ENCODE measurements at regions of chr4 and their contacts with region 1.

Region 1: GRCh38 chr4:119041951-119042560 is 93.6 kb upstream of the MYOZ2 start:
- DNase-seq: peak in 31 of 35 experiments; percentile 13 to 84 (median 39)
- ATAC-seq: peak; percentile 75 to 91 (median 84)
- H3K4me3 ChIP-seq: no peak overlapping the region
- H3K4me3 Mint-ChIP-seq: no peak overlapping the region
- H3K27ac ChIP-seq: no peak overlapping the region
- H3K27ac Mint-ChIP-seq: no peak overlapping the region
- H3K4me1 ChIP-seq: no peaks in the 10 kb centered on the region
- H3K4me1 Mint-ChIP-seq: peaks cover 0 to 6% (median 4%) of the 10 kb centered on the region in 3 donors
- H3K27me3 ChIP-seq: no peaks in the 10 kb centered on the region
- H3K27me3 Mint-ChIP-seq: peaks cover 0 to 2% of the 10 kb centered on the region in 2 donors

Region 2: DNA sequence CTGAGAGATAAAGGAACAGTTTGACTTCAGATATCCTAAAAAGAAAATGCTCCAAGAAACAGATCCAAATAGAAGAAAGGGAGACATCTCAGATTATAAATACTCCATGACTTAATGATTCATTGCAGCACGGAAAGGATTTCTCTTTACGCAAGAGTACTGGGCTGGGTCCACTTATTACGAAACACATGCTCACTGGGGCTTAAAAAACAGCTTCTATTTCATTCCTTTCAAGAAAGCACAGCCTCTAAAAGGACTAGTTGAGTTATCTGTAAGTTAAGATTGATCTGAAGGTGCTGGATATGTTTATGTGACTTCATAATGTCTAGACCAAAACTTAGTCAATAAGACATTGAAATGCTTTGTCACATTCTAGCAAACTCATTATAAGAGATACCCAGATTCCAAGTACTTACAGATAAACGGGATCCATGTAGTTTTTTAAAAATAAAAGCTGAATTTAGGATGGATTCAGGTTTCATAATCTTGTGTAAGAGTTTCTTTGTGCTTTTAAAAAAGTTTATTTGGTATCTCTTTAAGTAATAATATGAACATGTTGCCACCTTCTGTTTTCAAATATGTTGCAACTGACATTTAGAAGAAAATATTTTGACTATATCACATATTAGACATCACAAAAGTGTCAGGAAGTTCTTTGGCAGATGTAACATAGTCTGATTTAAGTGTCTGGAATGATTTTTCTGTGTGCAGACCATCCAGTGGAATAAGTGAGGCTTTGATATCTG is 16.0 kb before region 1 on chr4:
- CTCF ChIA-PET with region 1: interaction called, 3 to 5 read pairs
- POLR2A ChIA-PET with region 1: interaction called in 1 of 2 experiments, 11 read pairs
- DNase-seq: no peak
- ATAC-seq: no peak
- H3K4me3 ChIP-seq: no peak overlapping the region
- H3K4me3 Mint-ChIP-seq: no peak overlapping the region
- H3K27ac ChIP-seq: no peak overlapping the region
- H3K27ac Mint-ChIP-seq: no peak overlapping the region
- H3K4me1 ChIP-seq: no peaks in the 10 kb centered on the region
- H3K4me1 Mint-ChIP-seq: no peaks in the 10 kb centered on the region
- H3K27me3 ChIP-seq: no peaks in the 10 kb centered on the region
- H3K27me3 Mint-ChIP-seq: peaks cover 7 to 9% of the 10 kb centered on the region in 2 donors

Region 3: GRCh38 chr4:119286377-119287002 is 244.4 kb after region 1 on chr4:
- CTCF ChIA-PET with region 1: interaction called, 4 to 28 read pairs
- POLR2A ChIA-PET with region 1: no interaction called
- DNase-seq: peak in 18 of 35 experiments; percentile 3 to 72 (median 20)
- ATAC-seq: no peak
- H3K4me3 ChIP-seq: no peak overlapping the region
- H3K4me3 Mint-ChIP-seq: no peak overlapping the region
- H3K27ac ChIP-seq: no peak overlapping the region
- H3K27ac Mint-ChIP-seq: no peak overlapping the region
- H3K4me1 ChIP-seq: no peaks in the 10 kb centered on the region
- H3K4me1 Mint-ChIP-seq: peaks cover 19 to 25% (median 24%) of the 10 kb centered on the region in 3 donors
- H3K27me3 ChIP-seq: no peaks in the 10 kb centered on the region
- H3K27me3 Mint-ChIP-seq: no peaks in the 10 kb centered on the region

Region 4: DNA sequence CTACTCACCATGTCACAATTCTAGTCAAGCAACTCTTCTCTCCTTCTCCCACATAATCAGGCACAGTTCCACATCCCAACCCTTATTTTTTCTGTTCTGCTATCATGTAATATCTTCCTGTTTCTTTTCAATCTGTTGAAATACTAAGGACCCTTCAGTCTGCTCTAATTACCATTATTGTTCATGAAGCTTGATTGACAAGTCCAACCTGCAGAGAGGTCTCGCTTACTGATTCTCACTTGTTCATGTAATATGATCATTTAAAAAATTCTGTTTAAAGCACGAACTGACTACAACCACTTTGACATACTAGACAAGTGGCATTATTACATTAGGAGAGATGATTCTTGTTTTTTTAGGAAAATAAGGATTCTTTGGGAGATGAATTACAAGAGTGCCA is 1133.2 kb after region 1 on chr4:
- CTCF ChIA-PET with region 1: no interaction called
- POLR2A ChIA-PET with region 1: no interaction called
- DNase-seq: no peak
- ATAC-seq: no peak
- H3K4me3 ChIP-seq: no peak overlapping the region
- H3K4me3 Mint-ChIP-seq: no peak overlapping the region
- H3K27ac ChIP-seq: no peak overlapping the region
- H3K27ac Mint-ChIP-seq: no peak overlapping the region
- H3K4me1 ChIP-seq: no peaks in the 10 kb centered on the region
- H3K4me1 Mint-ChIP-seq: no peaks in the 10 kb centered on the region
- H3K27me3 ChIP-seq: peaks cover 0 to 6% of the 10 kb centered on the region in 2 experiments
- H3K27me3 Mint-ChIP-seq: peaks cover 23 to 24% of the 10 kb centered on the region in 2 donors

Measured in T-cell (primary cell).